Activated B cell treated with CpG ODN at 0.5 μM for 24 hours (primary cell): ENCODE measurements at regions of chr5 and their contacts with region 1.

Region 1: DNA sequence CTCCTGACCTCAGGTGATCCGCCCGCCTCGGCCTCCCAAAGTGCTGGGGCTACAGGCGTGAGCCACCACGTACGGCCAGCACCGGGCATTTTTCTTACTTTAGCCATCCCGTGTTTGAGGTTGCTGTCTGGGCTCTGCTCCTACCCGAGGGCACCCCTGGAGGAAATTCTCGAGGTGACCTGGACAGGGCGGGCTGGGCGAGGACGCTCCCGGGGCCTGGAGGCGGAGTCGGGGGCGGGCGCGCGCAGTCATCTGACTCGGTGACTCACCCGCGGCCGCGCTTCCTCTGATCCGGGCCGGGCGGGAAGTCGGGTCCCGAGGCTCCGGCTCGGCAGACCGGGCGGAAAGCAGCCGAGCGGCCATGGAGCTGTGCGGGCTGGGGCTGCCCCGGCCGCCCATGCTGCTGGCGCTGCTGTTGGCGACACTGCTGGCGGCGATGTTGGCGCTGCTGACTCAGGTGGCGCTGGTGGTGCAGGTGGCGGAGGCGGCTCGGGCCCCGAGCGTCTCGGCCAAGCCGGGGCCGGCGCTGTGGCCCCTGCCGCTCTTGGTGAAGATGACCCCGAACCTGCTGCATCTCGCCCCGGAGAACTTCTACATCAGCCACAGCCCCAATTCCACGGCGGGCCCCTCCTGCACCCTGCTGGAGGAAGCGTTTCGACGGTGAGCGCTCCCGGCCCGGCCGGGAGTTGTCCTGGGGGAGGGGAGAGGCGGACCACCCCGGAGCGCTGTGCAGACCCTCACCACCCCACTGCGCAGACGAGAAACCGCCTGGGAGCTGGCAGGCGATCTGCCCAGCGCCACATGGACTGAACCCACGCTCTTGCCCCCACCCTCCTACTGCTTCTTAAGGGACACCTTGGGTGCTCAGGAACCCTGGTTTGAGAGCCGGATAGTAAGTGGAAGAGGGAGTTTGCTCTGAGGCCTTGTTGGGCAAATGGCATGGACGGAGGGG is at the start of gene HEXB:
- DNase-seq: peak; percentile 77
- ATAC-seq: peak; percentile 86
- H3K4me3 Mint-ChIP-seq: peak within 1 kb of the TSS; percentile 81
- H3K27ac Mint-ChIP-seq: peak within 1 kb of the TSS; percentile 63
- H3K4me1 Mint-ChIP-seq: peaks cover 18% of the 10 kb centered on the region
- H3K27me3 Mint-ChIP-seq: no peaks in the 10 kb centered on the region
- CTCF ChIP-seq: no peak
- total RNA-seq, gene HEXB: 34.5 and 43.2 TPM in 2 replicates

Region 2: GRCh38 chr5:75078027-75078426 is 392.9 kb after region 1 on chr5:
- CTCF ChIA-PET with region 1: no interaction called
- POLR2A ChIA-PET with region 1: interaction called, 18 read pairs
- intact Hi-C with region 1: no loop called
- DNase-seq: no peak
- ATAC-seq: no peak
- H3K4me3 Mint-ChIP-seq: no peak overlapping the region
- H3K27ac Mint-ChIP-seq: no peak overlapping the region
- H3K4me1 Mint-ChIP-seq: no peaks in the 10 kb centered on the region
- H3K27me3 Mint-ChIP-seq: peaks cover 6% of the 10 kb centered on the region
- CTCF ChIP-seq: no peak